Caco-2 (cell line): ENCODE measurements at regions of chr1 and their contacts with region 1.

Region 1: GRCh38 chr1:244047621-244048471 is 3.2 kb upstream of the ZBTB18 start:
- DNase-seq: peak; percentile 97 to 99
- H3K4me3 ChIP-seq: peak overlapping the region; percentile 96
- H3K4me3 Mint-ChIP-seq: peak overlapping the region; percentile 85
- H3K27ac Mint-ChIP-seq: peak overlapping the region; percentile 57
- H3K4me1 ChIP-seq: 0 out of 2 replicates have a peak, but pooled peaks cover 11% of the 10 kb centered on the region
- H3K4me1 Mint-ChIP-seq: no peaks in the 10 kb centered on the region
- H3K27me3 ChIP-seq: no peaks in the 10 kb centered on the region
- H3K27me3 Mint-ChIP-seq: peaks cover 10% of the 10 kb centered on the region
- CTCF ChIP-seq: no peak

Region 2: GRCh38 chr1:243903895-243904294 is 144.0 kb before region 1 on chr1:
- CTCF ChIA-PET with region 1: no interaction called
- POLR2A ChIA-PET with region 1: no interaction called
- intact Hi-C with region 1: loop called (anchors 2 kb)
- DNase-seq: peak in 1 of 2 experiments; percentile 24
- H3K4me3 ChIP-seq: no peak overlapping the region
- H3K4me3 Mint-ChIP-seq: no peak overlapping the region
- H3K27ac Mint-ChIP-seq: no peak overlapping the region
- H3K4me1 ChIP-seq: peaks cover 23% of the 10 kb centered on the region
- H3K4me1 Mint-ChIP-seq: peaks cover 19% of the 10 kb centered on the region
- H3K27me3 ChIP-seq: no peaks in the 10 kb centered on the region
- H3K27me3 Mint-ChIP-seq: no peaks in the 10 kb centered on the region
- CTCF ChIP-seq: no peak

Region 3: GRCh38 chr1:244089561-244089960 is 41.7 kb after region 1 on chr1:
- CTCF ChIA-PET with region 1: no interaction called
- POLR2A ChIA-PET with region 1: interaction called, 4 read pairs
- intact Hi-C with region 1: loop called (anchors 2 kb)
- DNase-seq: peak; percentile 39 to 72
- H3K4me3 ChIP-seq: no peak overlapping the region
- H3K4me3 Mint-ChIP-seq: peak overlapping the region; percentile 15
- H3K27ac Mint-ChIP-seq: no peak overlapping the region
- H3K4me1 ChIP-seq: peaks cover 21% of the 10 kb centered on the region
- H3K4me1 Mint-ChIP-seq: peaks cover 21% of the 10 kb centered on the region
- H3K27me3 ChIP-seq: no peaks in the 10 kb centered on the region
- H3K27me3 Mint-ChIP-seq: no peaks in the 10 kb centered on the region
- CTCF ChIP-seq: no peak